Posterior vena cava (tissue), 2 donors: ENCODE measurements at regions of chr16 and their contacts with region 1.

Region 1: DNA sequence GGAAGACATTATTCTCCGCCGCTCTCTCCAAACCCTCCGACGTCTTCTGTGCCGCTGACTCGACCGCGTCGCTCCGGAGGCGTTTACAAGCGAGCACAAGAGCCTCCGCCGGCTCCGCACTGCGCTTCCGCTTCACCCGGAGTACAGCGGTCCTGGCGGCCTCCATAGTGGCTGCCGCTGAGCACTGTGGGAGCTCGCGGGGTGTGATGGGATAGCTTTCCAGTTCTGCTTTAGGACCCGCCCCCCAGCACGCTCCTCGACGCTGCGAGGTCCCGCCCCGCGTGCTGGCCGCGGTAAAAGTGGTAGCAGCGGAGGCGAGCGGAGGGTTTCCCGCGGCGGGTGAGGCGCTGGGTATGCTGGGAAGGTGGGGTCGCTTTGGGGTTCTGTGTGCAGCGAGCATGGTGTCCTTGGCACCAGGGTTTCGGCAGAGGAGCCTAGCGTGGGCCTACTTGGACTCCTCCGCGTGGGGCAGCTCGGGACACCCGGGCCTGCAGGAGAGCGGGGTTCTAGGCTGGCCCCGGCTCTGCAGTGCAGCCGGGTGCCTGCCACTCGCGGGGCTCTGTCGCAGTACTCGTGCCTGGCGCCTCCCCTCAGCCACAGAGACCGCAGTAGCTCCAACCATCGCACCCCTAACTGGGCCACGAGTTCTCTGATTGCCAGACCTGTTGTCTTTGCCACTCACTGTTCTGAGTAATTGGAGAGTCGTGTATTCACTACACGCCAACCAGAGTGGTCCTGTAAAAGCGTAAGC is at the starts of genes PRMT7 and SLC7A6OS:
- DNase-seq: peak; percentile 96
- total RNA-seq, gene PRMT7: 18.1 to 22.9 TPM
- total RNA-seq, gene SLC7A6OS: 9.9 to 12.5 TPM

Region 2: DNA sequence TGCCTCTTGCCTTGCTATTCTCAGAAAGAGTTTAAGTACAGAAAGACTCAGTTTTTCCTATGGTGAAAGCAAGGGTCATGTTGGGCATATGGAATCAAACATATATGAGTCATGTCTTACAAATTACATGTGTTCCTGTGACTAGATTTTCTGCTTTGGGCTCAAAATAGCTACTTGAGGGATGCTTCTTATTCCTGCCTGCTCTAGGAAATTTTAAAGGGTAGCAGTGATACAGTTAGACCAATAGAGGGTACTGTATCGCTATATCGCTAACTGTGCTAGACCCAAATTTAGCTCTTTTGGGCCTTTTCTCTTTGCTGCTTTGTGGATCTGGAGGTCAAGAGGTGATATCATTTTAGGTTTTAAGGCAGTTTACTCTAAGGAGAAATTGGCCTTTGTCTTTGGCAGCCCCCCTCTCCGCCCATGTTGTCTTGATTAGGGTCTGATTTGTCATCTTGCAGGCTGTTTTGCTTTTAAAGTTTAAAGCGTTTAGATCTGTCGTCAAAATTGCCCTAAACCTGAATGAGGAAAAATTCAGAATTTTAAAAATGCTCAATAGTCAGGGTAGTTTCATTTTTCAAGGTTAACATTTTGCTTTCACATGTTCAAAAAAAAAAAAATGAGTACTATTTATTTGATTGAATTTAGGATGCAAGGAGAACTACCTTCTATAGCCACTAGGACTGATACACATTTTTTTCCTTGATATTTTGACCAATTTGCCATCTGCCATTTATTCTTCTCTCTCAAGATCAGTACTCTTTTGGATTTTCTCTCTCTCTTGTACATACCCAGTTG is 216.9 kb before region 1 on chr16:
- intact Hi-C with region 1: no loop called
- DNase-seq: no peak

Region 3: DNA sequence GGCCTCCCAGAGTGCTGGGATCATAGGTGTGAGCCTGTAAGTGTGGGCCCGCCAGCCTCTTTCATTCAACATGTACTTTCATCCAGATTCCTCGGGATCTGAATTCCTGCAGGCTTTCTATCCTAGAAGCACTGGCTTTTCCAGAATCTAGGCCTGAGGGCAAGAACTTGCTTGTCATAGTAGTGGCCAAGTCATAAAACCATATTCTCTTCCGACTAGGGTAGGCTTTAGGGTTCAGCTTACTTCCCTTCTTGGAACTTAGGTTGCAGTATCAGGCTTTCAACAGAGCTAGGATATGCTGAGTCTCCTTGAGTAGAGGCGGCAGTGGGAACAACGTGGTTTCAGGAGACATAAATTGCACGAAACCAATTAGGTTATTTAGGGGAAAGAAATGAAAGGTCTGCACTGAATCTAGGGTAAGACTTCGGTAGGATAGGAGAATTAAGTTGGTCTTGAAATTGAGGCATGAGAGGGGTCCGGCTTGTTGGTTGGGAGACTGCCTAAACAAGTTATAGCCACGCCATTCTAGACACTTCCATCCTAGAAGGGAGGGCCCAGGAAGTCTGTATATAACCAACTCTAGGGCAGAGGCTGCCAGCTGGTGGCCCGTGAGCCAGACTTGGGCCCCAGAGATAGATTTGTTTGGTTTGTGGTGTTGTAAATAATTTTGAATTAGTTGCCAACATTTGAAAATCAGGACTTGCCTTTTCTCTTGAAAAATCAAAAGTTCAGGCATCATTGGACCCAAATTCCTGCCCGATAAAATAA is 31.0 kb before region 1 on chr16:
- intact Hi-C with region 1: loop called in 1 of 2 experiments (anchors 1 kb)
- DNase-seq: peak; percentile 1

Region 4: GRCh38 chr16:68539711-68540239 is 228.8 kb after region 1 on chr16:
- intact Hi-C with region 1: no loop called
- DNase-seq: no peak